CD8-positive, alpha-beta memory T cell (primary cell): ENCODE measurements at regions of chr17 and their contacts with region 1.

Region 1: GRCh38 chr17:32142038-32142856 is at the start of gene RHOT1:
- DNase-seq: peak; percentile 65 to 80 (median 77)
- H3K4me3 ChIP-seq: peak within 1 kb of the TSS; percentile 95
- H3K4me3 Mint-ChIP-seq: peak within 1 kb of the TSS; percentile 95 to 100 (median 97)
- H3K27ac ChIP-seq: peak within 1 kb of the TSS; percentile 75
- H3K27ac Mint-ChIP-seq: peak within 1 kb of the TSS; percentile 78 to 98 (median 87)
- H3K4me1 ChIP-seq: peaks cover 29% of the 10 kb centered on the region
- H3K4me1 Mint-ChIP-seq: peaks cover 26 to 47% (median 36%) of the 10 kb centered on the region in 3 donors
- H3K27me3 ChIP-seq: no peaks in the 10 kb centered on the region
- H3K27me3 Mint-ChIP-seq: peaks cover 0 to 4% of the 10 kb centered on the region in 2 donors
- total RNA-seq, gene RHOT1: 20.6 to 22.5 TPM

Region 2: GRCh38 chr17:32006957-32007462 is 135.2 kb before region 1 on chr17 and contains the start of gene LRRC37B:
- CTCF ChIA-PET with region 1: interaction called, 45 read pairs
- POLR2A ChIA-PET with region 1: no interaction called
- DNase-seq: peak; percentile 83 to 89 (median 84)
- H3K4me3 ChIP-seq: peak within 1 kb of the TSS; percentile 93
- H3K4me3 Mint-ChIP-seq: peak within 1 kb of the TSS; percentile 87 to 98 (median 89)
- H3K27ac ChIP-seq: peak within 1 kb of the TSS; percentile 70
- H3K27ac Mint-ChIP-seq: peak within 1 kb of the TSS; percentile 75 to 97 (median 87)
- H3K4me1 ChIP-seq: peaks cover 21% of the 10 kb centered on the region
- H3K4me1 Mint-ChIP-seq: peaks cover 31 to 48% (median 43%) of the 10 kb centered on the region in 3 donors
- H3K27me3 ChIP-seq: no peaks in the 10 kb centered on the region
- H3K27me3 Mint-ChIP-seq: peaks cover 0 to 2% of the 10 kb centered on the region in 2 donors
- total RNA-seq, gene LRRC37B: 16.2 to 17.6 TPM

Region 3: GRCh38 chr17:32127158-32127897 is 14.9 kb before region 1 on chr17:
- CTCF ChIA-PET with region 1: interaction called, 64 read pairs
- POLR2A ChIA-PET with region 1: no interaction called
- DNase-seq: peak; percentile 73 to 86 (median 80)
- H3K4me3 ChIP-seq: peak overlapping the region; percentile 94
- H3K4me3 Mint-ChIP-seq: peak overlapping the region; percentile 89 to 97 (median 94)
- H3K27ac ChIP-seq: peak overlapping the region; percentile 66
- H3K27ac Mint-ChIP-seq: peak overlapping the region; percentile 79 to 98 (median 96)
- H3K4me1 ChIP-seq: peaks cover 18% of the 10 kb centered on the region
- H3K4me1 Mint-ChIP-seq: peaks cover 14 to 31% (median 25%) of the 10 kb centered on the region in 3 donors
- H3K27me3 ChIP-seq: no peaks in the 10 kb centered on the region
- H3K27me3 Mint-ChIP-seq: no peaks in the 10 kb centered on the region

Region 4: DNA sequence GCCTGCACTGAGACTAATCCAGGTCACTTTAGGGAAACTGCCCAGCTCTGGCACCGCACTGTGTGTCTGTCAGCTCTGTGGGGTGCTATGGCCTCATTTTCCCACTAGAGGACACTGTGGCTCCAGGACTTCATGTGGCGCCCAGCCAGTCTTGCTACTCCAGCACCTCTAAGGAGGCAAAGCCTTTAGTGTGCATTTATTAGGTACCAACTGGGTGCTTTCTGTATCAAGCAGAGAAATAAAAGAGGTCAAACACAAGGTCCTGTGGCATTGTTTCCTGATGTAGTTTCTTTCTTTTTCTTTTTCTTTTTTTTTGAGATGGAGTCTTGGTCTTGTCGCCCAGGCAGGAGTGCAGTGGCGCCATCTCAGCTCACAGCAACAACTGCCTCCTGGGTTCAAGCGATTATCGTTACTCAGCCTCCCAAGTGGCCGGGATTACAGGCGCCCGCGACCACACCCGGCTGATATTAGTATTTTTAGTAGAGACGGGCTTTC is 110.9 kb after region 1 on chr17:
- CTCF ChIA-PET with region 1: no interaction called
- POLR2A ChIA-PET with region 1: no interaction called
- DNase-seq: peak; percentile 19 to 65 (median 34)
- H3K4me3 ChIP-seq: no peak overlapping the region
- H3K4me3 Mint-ChIP-seq: no peak overlapping the region
- H3K27ac ChIP-seq: no peak overlapping the region
- H3K27ac Mint-ChIP-seq: peak overlapping the region in 1 of 8 donors; percentile 4
- H3K4me1 ChIP-seq: no peaks in the 10 kb centered on the region
- H3K4me1 Mint-ChIP-seq: no peaks in the 10 kb centered on the region
- H3K27me3 ChIP-seq: no peaks in the 10 kb centered on the region
- H3K27me3 Mint-ChIP-seq: peaks cover 7 to 9% of the 10 kb centered on the region in 2 donors